Activated CD4-positive, alpha-beta memory T cell treated with anti-CD3 and anti-CD28 coated beads for 36 hours (primary cell): ENCODE measurements at regions of chrX and their contacts with region 1.

Region 1: GRCh38 chrX:71283403-71284143 is at the start of gene NONO:
- DNase-seq: peak; percentile 85
- H3K4me3 Mint-ChIP-seq: peak within 1 kb of the TSS; percentile 98
- H3K27ac Mint-ChIP-seq: peak within 1 kb of the TSS; percentile 100
- H3K4me1 Mint-ChIP-seq: peaks cover 10% of the 10 kb centered on the region
- H3K27me3 Mint-ChIP-seq: no peaks in the 10 kb centered on the region
- total RNA-seq, gene NONO: 450 to 460 TPM

Region 2: DNA sequence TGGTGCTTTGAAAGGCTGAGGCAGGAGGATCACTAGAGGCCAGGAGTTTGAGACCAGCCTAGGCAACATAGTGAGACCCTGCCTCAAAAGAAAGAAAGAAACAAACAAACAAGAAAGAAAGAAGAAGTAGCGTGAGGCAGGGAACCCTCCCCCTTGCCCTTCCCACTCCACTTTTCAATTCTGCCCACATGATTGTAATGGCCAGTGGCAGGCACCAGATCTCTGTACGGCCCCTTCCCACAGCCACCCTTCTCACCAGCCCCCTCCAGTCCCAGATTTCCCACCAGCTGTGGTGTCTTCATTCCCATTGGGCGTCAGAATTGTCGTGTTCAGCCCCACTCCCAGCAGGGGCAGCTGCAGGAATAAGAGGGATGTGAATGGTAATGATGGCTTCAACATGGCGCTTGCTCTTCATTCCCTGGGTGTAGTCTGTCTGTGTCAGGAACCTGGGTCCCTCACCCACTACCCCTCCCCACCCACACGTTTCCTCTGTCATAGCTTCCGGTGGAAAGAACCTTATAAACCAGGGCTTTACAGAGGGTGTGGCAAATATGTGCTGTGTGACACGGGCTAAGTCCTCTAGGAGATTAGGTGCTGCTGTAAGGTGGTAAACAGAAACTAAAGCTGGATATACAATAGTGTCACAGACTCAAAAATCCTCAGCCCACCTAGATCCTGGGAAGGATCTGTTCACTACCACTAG is 172.3 kb before region 1 on chrX and contains the start of gene IL2RG:
- CTCF ChIA-PET with region 1: no interaction called
- POLR2A ChIA-PET with region 1: interaction called, 8 read pairs
- intact Hi-C with region 1: loop called (anchors 5 kb)
- DNase-seq: peak; percentile 85
- H3K4me3 Mint-ChIP-seq: peak within 1 kb of the TSS; percentile 99
- H3K27ac Mint-ChIP-seq: peak within 1 kb of the TSS; percentile 98
- H3K4me1 Mint-ChIP-seq: peaks cover 38% of the 10 kb centered on the region
- H3K27me3 Mint-ChIP-seq: no peaks in the 10 kb centered on the region
- total RNA-seq, gene IL2RG: 289 to 290 TPM

Region 3: GRCh38 chrX:71254092-71254941 is 29.3 kb before region 1 on chrX and contains the start of gene ZMYM3:
- CTCF ChIA-PET with region 1: interaction called, 3 read pairs
- POLR2A ChIA-PET with region 1: interaction called, 6 read pairs
- intact Hi-C with region 1: loop called (anchors 1 kb)
- DNase-seq: peak; percentile 84
- H3K4me3 Mint-ChIP-seq: peak within 1 kb of the TSS; percentile 86
- H3K27ac Mint-ChIP-seq: peak within 1 kb of the TSS; percentile 73
- H3K4me1 Mint-ChIP-seq: peaks cover 25% of the 10 kb centered on the region
- H3K27me3 Mint-ChIP-seq: no peaks in the 10 kb centered on the region
- total RNA-seq, gene ZMYM3: 17.2 to 17.5 TPM

Region 4: DNA sequence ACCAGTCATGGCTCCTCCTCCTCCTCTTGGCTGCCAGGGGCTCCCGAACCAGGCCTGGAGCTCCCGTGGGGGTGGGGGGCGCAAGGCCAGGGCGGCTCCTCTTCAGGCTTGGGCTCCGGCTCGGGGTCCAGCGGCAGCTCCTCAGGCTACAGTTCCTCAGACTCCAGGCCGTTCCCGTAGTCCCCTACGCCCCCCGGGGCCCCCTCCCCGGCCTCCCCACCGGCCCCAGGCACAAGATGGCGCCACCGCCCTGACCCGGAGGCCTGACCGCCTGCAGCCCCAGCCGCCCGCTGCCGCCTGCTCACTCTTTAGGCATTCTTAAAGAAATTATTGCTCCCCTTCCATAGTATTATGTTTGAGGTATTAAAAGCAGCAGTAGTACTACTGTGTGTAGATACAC is 137.1 kb after region 1 on chrX:
- CTCF ChIA-PET with region 1: no interaction called
- POLR2A ChIA-PET with region 1: no interaction called
- intact Hi-C with region 1: no loop called
- DNase-seq: no peak
- H3K4me3 Mint-ChIP-seq: no peak overlapping the region
- H3K27ac Mint-ChIP-seq: no peak overlapping the region
- H3K4me1 Mint-ChIP-seq: no peaks in the 10 kb centered on the region
- H3K27me3 Mint-ChIP-seq: no peaks in the 10 kb centered on the region

Region 5: GRCh38 chrX:71989768-71990426 is 706.3 kb after region 1 on chrX:
- CTCF ChIA-PET with region 1: no interaction called
- POLR2A ChIA-PET with region 1: no interaction called
- intact Hi-C with region 1: no loop called
- DNase-seq: no peak
- H3K4me3 Mint-ChIP-seq: no peak overlapping the region
- H3K27ac Mint-ChIP-seq: no peak overlapping the region
- H3K4me1 Mint-ChIP-seq: peaks cover 10% of the 10 kb centered on the region
- H3K27me3 Mint-ChIP-seq: no peaks in the 10 kb centered on the region